ENCODE measurements at regions of chr6 and their contacts with region 1.

Region 1: DNA sequence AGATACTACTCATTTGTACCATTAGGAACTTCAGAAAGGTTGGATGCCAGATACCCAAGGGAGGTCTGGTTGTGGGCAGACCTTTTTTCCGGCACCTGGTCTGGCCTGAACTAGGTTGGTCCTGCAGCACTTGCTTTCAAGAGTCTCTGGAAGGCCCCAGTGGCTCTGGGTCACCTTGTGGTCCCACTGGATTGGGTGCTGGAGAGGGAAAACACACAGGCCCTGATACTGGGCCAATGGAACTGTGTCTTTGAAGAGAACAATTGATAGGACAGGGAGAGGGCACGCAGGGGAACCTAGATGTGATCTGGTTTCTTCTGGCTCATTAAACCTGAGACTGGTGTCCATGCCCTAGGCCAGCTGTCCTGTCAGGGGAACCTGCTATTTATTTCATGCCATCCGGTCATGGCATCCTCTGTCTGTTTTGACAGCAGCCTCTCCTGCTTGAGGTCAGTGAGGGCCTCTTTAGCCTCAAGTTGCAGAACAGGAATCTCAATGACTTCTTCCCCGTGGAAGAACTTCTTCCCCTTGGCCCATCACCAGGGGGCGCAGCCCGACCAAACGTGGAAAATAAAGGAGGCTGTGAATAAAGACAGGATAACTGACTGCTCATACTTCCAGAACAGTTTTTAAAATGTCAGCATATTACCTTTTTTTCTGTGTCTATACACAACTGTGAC is 25.0 kb downstream of the TAF8 start:
- DNase-seq: peak; percentile 77 to 90 (median 82)
- H3K4me3 ChIP-seq: no peak overlapping the region
- H3K27ac ChIP-seq: no peak overlapping the region
- H3K4me1 ChIP-seq: peaks cover 0 to 6% of the 10 kb centered on the region in 2 donors
- H3K27me3 ChIP-seq: no peaks in the 10 kb centered on the region
- CTCF ChIP-seq: peak; percentile 67 to 92 (median 88)
- POLR2A ChIP-seq: no peak

Region 2: GRCh38 chr6:41836022-41836659 is 239.2 kb before region 1 on chr6:
- intact Hi-C with region 1: no loop called
- DNase-seq: no peak
- H3K4me3 ChIP-seq: no peak overlapping the region
- H3K27ac ChIP-seq: no peak overlapping the region
- H3K4me1 ChIP-seq: no peaks in the 10 kb centered on the region
- H3K27me3 ChIP-seq: no peaks in the 10 kb centered on the region
- CTCF ChIP-seq: no peak
- POLR2A ChIP-seq: no peak

Region 3: DNA sequence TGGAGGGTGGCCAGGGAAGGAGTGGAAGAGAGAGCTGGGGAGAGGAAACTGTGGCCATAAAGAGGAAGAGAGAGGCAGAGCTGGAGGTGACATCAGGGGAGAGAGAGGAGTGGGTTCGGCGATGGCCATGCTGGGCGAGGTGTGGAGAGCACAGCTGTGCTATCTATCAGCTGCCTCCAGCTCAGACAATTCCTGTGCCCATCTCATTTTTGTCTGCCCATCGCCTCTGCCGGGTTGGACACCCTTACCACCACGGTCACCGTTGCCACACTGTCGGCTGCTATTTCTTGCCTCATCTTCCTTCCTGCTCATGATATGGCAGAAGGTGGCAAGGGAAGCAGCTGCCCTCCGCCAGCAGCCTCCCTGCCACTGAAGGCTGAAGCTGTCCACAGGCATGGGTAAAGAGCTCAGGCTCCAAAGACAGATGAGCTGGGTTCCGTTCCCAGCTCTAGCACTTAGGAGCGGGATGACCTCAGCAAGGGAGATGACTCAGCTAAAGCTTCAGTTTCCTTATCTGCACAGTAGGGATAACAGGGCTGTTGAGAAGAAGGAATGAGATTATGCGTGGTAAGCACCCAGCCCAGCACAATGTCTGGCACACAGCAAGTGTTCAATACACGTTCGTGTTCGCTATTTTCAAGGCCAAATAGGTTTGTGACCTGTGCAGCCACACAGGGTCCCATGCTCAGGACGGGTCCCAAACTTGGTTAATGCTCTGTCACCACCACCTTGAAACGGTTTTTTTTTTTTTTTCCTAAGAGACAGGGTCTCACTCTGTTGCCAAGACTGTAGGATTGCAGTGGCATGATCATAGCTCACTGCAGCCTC is 46.9 kb before region 1 on chr6:
- intact Hi-C with region 1: no loop called
- DNase-seq: peak; percentile 45 to 77 (median 71)
- H3K4me3 ChIP-seq: no peak overlapping the region
- H3K27ac ChIP-seq: peak overlapping the region in 4 of 5 donors; percentile 35 to 87 (median 57)
- H3K4me1 ChIP-seq: peaks cover 3 to 42% of the 10 kb centered on the region in 2 donors
- H3K27me3 ChIP-seq: no peaks in the 10 kb centered on the region
- CTCF ChIP-seq: no peak
- POLR2A ChIP-seq: peak in 1 of 2 donors; percentile 17

Region 4: DNA sequence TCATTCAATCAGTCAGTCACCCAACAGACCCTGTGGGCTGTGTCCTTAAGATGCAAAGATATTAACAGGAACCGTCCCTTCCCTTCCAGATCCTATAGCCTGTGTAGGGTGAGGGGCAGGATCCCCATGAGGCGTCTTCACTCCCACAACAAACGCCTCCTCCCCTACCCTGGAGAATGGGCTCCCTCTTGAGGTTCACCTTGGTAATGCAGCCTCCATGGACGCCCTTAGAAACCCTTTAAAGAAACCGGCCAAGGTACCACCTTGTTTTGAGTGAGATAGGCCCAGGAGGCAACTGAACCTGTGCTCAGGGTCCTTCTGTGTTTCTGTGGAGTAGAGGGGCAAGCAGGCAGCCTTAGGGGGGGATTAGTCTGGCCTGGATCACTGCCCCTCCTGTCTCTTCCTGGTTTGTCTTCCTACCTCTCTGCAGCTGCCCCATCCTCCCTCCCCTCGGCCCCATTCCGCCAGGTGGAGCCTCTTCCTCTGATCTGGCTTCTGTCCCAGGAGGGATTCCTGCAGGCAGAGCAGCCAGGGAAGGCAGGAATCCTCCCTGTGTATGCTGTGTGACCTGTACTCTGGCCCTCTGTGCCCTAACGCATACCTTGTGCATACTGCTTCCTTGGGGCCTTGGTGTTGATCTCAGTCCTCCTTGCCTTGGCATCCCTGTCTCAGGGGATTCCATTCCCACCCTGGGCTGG is 91.3 kb after region 1 on chr6:
- intact Hi-C with region 1: loop called (anchors 2 to 5 kb)
- DNase-seq: peak; percentile 56 to 79 (median 70)
- H3K4me3 ChIP-seq: no peak overlapping the region
- H3K27ac ChIP-seq: no peak overlapping the region
- H3K4me1 ChIP-seq: no peaks in the 10 kb centered on the region
- H3K27me3 ChIP-seq: no peaks in the 10 kb centered on the region
- CTCF ChIP-seq: peak; percentile 90 to 96 (median 94)
- POLR2A ChIP-seq: no peak

Region 5: GRCh38 chr6:42217519-42218367 is 142.4 kb after region 1 on chr6 and contains the start of gene MRPS10:
- intact Hi-C with region 1: loop called in 1 of 2 experiments (anchors 5 kb)
- DNase-seq: peak; percentile 90 to 98 (median 95)
- H3K4me3 ChIP-seq: peak within 1 kb of the TSS; percentile 8 to 84 (median 78)
- H3K27ac ChIP-seq: peak within 1 kb of the TSS; percentile 12 to 86 (median 54)
- H3K4me1 ChIP-seq: peaks cover 8 to 9% of the 10 kb centered on the region in 2 donors
- H3K27me3 ChIP-seq: no peaks in the 10 kb centered on the region
- CTCF ChIP-seq: no peak
- POLR2A ChIP-seq: peak; percentile 73 to 74
- total RNA-seq, gene MRPS10: 25.5 to 43.2 (median 34.3) TPM

Region 6: DNA sequence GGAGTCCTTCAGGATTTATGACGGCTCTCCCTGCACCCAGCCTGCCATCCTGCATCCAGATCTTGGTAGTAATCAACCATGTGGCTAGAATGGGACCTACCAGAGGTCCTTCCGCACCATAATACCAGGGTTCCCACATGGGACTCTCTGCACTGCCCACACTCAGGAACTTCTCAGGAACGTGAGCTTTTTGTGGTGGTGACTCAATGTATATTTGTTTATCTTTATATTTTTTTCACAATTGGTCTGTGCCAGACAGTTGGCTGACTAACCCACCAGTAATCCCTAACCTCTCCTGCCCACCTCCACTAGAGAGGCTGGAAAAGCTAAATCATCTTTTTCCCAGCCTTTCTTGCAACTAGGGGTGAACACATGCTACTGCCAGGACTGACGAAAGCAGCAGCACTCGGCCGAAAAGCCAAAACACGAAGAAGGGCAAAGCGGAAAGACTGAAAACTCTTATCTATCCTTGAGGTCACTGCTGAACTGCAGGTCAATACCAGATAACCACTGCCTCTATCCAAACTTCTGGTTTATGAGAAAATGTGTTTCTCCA is 263.4 kb after region 1 on chr6:
- intact Hi-C with region 1: no loop called
- DNase-seq: peak in 5 of 7 donors; percentile 38 to 66 (median 62)
- H3K4me3 ChIP-seq: no peak overlapping the region
- H3K27ac ChIP-seq: peak overlapping the region in 2 of 5 donors; percentile 31 to 47
- H3K4me1 ChIP-seq: peaks cover 8 to 13% of the 10 kb centered on the region in 2 donors
- H3K27me3 ChIP-seq: no peaks in the 10 kb centered on the region
- CTCF ChIP-seq: peak in 5 of 6 experiments; percentile 17 to 35 (median 29)
- POLR2A ChIP-seq: no peak

Region 7: DNA sequence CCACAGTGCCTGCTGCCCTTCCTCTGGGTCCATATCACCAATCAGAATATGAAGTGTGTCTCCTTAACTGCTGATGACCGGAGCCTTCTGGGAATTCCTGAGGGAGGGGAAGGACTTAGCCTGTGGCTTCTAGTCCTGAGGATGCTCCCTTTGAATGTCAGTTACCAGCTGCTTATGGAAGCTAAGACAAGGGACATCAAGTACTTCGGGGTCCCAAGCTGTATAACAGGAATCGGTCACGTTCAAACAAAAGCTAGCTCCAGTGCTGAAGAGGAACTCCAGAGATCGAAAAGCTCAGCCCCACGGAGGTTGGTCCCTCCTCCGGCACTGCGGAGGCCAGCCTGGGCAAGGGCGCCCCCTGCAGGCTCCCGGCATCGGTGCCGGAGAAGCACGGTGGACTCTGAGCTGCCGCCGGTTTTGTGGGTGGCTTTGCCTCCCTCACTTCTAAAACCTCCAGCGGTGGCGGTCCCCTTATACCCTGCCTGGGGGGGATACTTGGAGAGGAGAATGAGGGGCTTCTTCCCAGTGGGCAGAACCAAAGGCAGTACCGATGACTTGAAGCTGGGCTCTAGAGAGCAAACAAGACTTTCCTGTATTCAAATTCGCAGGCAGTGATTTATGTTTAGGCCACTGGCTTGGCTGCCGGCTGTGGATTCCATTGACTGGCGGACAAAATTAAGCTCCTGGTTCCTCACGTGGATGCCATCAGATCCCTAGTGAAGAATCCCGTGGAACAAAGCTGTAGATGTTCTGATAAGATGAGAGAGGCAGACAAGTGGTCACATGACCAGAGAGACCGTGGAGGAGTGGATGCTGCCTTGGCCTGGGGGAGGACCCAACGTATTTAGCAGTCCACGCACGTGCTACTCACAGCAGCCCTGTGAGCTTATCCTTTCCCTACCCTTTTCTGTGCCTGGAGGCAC is 472.4 kb after region 1 on chr6:
- intact Hi-C with region 1: loop called in 1 of 2 experiments (anchors 10 kb)
- DNase-seq: peak; percentile 76 to 89 (median 87)
- H3K4me3 ChIP-seq: peak overlapping the region in 2 of 4 donors; percentile 57 to 72
- H3K27ac ChIP-seq: peak overlapping the region in 4 of 5 donors; percentile 24 to 83 (median 55)
- H3K4me1 ChIP-seq: peaks cover 0 to 5% of the 10 kb centered on the region in 2 donors
- H3K27me3 ChIP-seq: no peaks in the 10 kb centered on the region
- CTCF ChIP-seq: peak; percentile 88 to 99 (median 96)
- POLR2A ChIP-seq: peak in 1 of 2 donors; percentile 20

Measured in adrenal gland (tissue), 19 donors.